Right ventricle myocardium inferior (tissue), 1 donor: ENCODE measurements at regions of chr10 and their contacts with region 1.

Region 1: DNA sequence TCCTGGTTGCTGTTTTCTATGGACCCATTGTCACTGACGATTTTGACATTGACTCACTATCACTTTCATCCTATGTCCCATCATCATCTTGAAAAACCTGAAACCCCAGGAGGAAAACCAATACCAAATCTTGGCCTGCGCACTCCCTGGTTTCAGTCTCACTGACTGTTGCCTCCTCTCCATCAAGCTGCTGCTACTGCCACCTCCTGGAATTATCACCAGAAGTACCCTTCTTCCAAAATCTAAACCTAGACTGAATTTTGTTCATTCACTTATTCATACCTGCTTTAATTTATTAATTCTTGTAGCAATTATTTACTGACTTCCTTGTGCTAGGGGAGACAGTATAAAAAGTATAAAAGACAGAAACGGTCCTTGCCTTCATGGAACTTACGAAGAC is 44.5 kb upstream of the ACBD5 start:
- DNase-seq: no peak
- ATAC-seq: no peak

Region 2: DNA sequence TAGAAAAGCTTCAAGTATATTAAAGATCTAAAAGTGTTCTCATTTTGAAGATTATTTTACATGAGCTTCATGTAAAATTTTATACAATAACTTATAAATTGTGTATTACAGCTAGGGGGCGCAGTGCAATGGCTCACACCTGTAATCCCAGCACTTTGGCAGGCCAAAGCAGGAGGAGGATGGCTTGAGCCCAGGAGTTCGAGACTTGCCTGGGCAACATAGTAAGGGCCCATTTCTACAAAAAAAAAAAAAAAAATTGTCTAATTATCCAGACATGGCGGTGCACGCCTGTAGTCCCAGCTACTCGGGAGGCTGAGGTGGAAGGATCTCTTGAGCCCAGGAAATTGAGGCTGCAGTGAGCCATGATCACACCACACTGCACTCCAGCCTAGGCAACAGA is 61.1 kb before region 1 on chr10:
- intact Hi-C with region 1: loop called (anchors 10 kb)
- DNase-seq: no peak
- ATAC-seq: no peak

Region 3: GRCh38 chr10:27297839-27298521 is 12.9 kb after region 1 on chr10:
- intact Hi-C with region 1: no loop called
- DNase-seq: no peak
- ATAC-seq: no peak